ENCODE measurements at regions of chr1 and their contacts with region 1.

Region 1: DNA sequence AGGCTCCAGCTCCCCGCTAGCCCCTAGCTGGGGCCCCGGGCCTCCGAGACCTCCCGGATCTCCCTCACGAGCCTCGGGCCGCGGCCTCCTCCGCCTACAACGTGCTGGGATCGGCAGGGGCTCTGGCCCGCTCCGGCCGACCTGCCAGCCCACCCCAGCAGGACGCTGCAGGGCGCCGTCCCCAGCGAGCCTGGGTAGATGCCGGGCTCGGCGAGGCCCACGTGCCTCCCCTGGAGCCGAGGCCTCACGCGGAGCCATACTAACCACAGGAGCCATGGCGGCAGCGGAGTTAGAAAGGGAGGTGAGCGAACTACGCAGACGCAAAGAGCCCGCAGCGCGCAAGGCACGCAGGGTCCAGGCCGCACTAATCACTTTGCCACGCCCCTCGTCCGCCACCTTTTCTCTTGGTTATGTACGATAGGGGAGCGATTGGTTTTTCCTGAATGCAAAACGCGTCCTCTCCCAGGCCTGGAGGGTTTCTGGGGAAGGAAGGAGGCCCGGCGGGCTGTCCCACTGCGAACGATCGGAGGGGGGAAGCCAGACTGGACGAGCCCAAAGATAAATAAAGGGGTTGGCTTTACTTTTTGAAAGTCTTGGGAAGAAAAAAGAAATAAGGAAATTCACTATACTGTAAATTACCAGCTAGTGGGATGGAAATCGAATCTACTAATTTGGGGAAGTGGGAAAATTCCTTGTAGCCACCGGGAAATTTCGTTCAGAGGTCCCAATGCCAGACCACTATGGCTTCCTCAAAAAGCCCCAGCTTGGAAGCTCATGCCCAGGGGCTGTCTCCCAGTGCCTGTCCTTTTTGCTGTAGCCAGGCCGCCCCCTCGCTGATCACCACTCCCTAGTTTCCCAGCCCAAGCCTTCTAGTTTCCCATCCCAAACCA is at the start of gene RPL22:
- DNase-seq: peak; percentile 97 to 99 (median 98)
- ATAC-seq: peak; percentile 99
- H3K4me3 ChIP-seq: peak within 1 kb of the TSS; percentile 66 to 99
- H3K27ac ChIP-seq: peak within 1 kb of the TSS; percentile 78 to 82
- H3K4me1 ChIP-seq: peaks cover 5 to 32% of the 10 kb centered on the region in 2 donors
- H3K27me3 ChIP-seq: no peaks in the 10 kb centered on the region
- CTCF ChIP-seq: no peak
- polyA plus RNA-seq, gene RPL22: 591 to 719 (median 663) TPM

Region 2: GRCh38 chr1:5718831-5719632 is 480.5 kb before region 1 on chr1:
- intact Hi-C with region 1: no loop called
- DNase-seq: peak in 1 of 4 donors; percentile 22
- ATAC-seq: no peak
- H3K4me3 ChIP-seq: no peak overlapping the region
- H3K27ac ChIP-seq: no peak overlapping the region
- H3K4me1 ChIP-seq: no peaks in the 10 kb centered on the region
- H3K27me3 ChIP-seq: peaks cover 0 to 57% of the 10 kb centered on the region in 2 donors
- CTCF ChIP-seq: no peak

Region 3: DNA sequence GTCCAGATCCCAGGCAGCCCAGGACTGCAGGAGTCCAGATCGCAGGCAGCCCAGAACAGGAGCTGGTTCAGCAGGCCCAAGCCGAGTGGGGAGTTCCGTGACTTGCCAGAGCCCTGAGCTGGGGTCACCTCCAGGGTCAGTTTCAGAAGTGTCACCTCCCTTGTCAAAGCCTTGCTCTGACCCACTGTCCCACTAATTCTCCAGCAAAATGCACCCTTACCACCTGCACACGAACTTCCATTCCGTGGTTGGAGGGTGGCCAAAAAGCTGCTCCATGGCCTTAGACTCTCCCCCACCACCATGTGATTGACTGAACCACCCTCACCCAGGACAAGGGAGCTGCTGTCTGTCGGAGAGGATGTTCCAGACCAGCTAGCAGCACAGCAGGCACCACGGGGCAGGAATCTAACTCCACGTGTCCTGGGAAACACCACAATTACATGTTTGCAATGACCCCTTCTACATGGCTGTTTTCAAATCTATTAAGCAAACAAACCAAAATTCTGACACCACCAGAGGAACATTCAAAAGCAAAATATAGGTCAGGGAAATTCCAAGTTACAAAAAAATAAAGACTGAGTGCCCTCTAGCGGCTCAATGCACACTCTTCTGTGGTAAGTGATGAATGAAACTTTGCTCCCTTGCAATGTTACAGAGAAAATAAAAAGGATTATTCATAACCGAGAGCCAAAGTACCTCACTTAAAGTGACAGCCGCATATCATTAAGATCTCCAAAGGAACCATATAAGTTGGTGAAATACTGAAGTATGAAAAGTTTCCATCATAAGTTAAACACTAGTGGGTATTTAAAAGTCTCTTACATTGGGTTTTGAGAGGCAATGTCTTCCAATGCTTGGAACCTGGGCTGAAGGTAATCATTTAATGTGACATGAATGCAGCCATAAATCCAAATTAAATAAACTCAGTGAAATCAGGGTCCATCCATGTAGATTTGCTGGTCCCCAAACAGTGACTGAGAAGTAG is 283.7 kb before region 1 on chr1:
- intact Hi-C with region 1: no loop called
- DNase-seq: peak in 2 of 4 donors; percentile 14 to 39
- ATAC-seq: peak; percentile 75
- H3K4me3 ChIP-seq: no peak overlapping the region
- H3K27ac ChIP-seq: no peak overlapping the region
- H3K4me1 ChIP-seq: no peaks in the 10 kb centered on the region
- H3K27me3 ChIP-seq: no peaks in the 10 kb centered on the region
- CTCF ChIP-seq: peak; percentile 36 to 43

Region 4: GRCh38 chr1:6016191-6016865 is 183.2 kb before region 1 on chr1:
- intact Hi-C with region 1: no loop called
- DNase-seq: peak in 1 of 4 donors; percentile 49
- ATAC-seq: no peak
- H3K4me3 ChIP-seq: no peak overlapping the region
- H3K27ac ChIP-seq: no peak overlapping the region
- H3K4me1 ChIP-seq: peaks cover 0 to 13% of the 10 kb centered on the region in 2 donors
- H3K27me3 ChIP-seq: no peaks in the 10 kb centered on the region
- CTCF ChIP-seq: no peak

Region 5: DNA sequence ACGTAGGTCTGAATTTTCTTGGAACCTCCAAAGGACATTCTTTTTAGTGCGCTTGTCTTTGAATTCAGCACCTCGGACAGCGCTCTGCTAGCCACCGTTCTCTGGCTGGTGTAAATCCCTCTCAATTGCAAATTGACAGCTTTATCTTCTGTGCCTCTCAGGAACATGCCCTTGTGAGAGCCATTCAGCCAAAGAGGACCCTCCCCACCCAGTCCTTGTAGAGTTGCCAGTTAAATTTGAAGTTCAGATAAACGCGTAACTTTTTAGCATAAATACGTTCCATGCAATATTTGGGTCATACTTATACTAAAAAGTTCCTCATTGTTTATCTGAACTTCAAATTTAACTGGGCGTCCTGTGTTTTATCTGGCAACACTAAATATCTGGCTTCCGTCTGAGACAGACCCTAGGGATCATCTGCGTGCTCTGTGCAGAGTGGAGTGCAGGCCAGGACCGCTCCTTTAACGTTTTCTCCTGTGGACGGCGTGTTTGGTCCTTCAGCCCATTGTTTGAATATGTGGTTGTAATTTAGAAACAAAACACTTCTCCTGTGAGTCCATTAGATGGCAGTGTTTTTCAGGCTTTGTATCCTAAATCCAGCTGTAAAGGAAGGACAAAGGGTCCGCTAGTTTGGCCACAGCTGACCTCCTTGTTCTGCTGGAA is 146.9 kb before region 1 on chr1:
- intact Hi-C with region 1: loop called in 1 of 2 experiments (anchors 10 kb)
- DNase-seq: peak in 2 of 4 donors; percentile 72 to 79
- ATAC-seq: peak; percentile 72
- H3K4me3 ChIP-seq: no peak overlapping the region
- H3K27ac ChIP-seq: no peak overlapping the region
- H3K4me1 ChIP-seq: peaks cover 0 to 11% of the 10 kb centered on the region in 2 donors
- H3K27me3 ChIP-seq: no peaks in the 10 kb centered on the region
- CTCF ChIP-seq: peak in 1 of 2 donors; percentile 23

Region 6: DNA sequence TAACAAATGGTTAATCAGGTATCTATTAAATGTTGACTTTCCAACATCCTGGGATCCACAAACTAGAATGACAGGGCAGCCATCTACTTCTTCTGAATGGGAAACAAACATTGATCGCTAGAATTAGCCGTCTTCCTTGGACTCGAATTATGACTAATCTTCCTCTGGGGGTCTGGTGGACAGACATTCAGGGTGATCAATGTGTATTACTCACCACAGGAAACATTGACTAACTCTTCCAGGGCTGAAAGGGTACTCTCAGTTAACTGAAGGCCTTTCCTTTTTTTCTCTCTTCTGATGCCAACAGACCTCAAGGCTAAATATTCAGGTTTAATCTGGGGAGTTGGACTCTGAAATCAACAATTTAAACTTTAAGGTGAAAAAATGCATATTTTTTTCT is 345.3 kb after region 1 on chr1:
- intact Hi-C with region 1: no loop called
- DNase-seq: no peak
- ATAC-seq: no peak
- H3K4me3 ChIP-seq: no peak overlapping the region
- H3K27ac ChIP-seq: peak overlapping the region in 1 of 2 donors; percentile 31
- H3K4me1 ChIP-seq: no peaks in the 10 kb centered on the region
- H3K27me3 ChIP-seq: no peaks in the 10 kb centered on the region
- CTCF ChIP-seq: no peak